PC-9 (cell line): ENCODE measurements at regions of chr4 and their contacts with region 1.

Region 1: DNA sequence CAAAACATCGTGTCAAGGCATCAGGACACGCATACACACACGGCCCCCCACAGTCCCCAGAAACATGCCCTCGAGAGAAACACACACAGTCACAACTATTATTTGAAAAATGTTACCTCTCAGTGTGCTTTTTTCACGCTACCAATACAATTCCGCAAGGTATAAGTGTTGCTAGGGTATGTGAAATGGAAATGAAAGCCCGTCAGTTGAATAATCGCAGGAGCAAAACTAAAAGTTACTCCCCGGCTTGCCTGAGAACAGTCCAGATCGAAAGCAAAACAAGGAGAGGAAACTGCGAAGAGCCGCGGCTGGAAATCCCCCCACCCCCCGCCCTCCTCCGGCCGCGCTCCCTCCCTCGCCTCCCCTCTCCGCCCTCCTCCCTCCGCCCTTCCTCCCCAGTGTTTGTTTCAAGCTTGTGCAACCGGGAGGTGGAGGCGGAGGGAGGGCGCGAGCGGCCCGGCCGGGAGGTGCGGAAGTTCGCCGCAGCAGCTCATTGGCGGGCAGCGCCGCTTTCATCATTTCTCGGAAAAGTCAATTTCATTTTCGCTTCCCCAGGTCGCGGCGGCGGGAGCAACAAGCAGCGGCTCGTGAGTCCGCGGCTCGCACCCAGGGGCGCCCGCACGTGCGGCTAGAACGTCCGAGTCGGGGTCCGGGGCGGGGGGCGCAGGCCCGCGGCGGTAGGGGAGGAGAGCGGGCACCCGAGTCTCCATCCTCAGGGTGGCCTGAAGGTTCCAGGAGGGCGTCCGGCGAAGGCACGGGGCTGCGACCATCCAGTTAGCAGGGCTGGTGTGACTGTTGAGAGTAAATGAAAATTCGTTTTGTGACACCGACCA is at the start of gene IRF2:
- DNase-seq: peak; percentile 81 to 93
- H3K4me3 ChIP-seq: peak within 1 kb of the TSS; percentile 97
- H3K27ac ChIP-seq: peak within 1 kb of the TSS; percentile 83
- H3K4me1 ChIP-seq: peaks cover 21% of the 10 kb centered on the region
- H3K27me3 ChIP-seq: no peaks in the 10 kb centered on the region
- CTCF ChIP-seq: no peak
- total RNA-seq, gene IRF2: 27.4 and 34.4 TPM in 2 replicates

Region 2: GRCh38 chr4:183287677-183288076 is 1186.8 kb before region 1 on chr4:
- CTCF ChIA-PET with region 1: no interaction called
- POLR2A ChIA-PET with region 1: no interaction called
- intact Hi-C with region 1: no loop called
- DNase-seq: no peak
- H3K4me3 ChIP-seq: no peak overlapping the region
- H3K27ac ChIP-seq: no peak overlapping the region
- H3K4me1 ChIP-seq: no peaks in the 10 kb centered on the region
- H3K27me3 ChIP-seq: no peaks in the 10 kb centered on the region
- CTCF ChIP-seq: no peak

Region 3: DNA sequence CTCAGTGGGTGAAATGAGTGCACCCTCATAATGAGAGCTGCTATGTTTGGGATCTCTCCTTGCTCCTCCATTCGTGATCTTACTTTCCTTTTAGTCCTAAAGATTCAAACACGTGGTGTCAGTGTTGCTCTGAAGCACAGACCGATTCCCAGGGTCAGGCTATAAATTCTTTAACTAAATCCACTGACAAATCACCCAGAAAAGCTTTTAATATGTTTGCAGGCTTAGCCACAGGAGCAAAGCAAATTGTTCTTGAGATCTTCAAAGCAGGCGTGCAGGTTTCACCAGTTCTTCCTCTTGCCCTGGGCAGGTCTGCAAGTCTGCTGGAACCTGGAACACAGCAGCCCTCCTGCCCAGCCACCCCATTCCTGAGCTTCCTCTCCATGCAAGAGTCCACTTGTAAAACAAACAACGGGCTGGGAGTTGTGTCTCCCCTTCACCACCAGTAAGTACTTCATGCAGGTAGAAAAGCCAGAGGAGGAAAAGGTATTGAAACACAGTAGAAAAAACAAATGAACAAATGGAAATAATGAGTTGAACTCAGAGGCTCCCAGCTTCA is 186.7 kb before region 1 on chr4:
- CTCF ChIA-PET with region 1: interaction called, 4 read pairs
- POLR2A ChIA-PET with region 1: no interaction called
- intact Hi-C with region 1: loop called (anchors 1 kb)
- DNase-seq: peak; percentile 76 to 93
- H3K4me3 ChIP-seq: peak overlapping the region; percentile 27; the same call in 1 of the 2 replicates
- H3K27ac ChIP-seq: peak overlapping the region; percentile 69
- H3K4me1 ChIP-seq: peaks cover 28% of the 10 kb centered on the region
- H3K27me3 ChIP-seq: no peaks in the 10 kb centered on the region
- CTCF ChIP-seq: peak; percentile 25; the same call in 1 of the 2 replicates

Region 4: DNA sequence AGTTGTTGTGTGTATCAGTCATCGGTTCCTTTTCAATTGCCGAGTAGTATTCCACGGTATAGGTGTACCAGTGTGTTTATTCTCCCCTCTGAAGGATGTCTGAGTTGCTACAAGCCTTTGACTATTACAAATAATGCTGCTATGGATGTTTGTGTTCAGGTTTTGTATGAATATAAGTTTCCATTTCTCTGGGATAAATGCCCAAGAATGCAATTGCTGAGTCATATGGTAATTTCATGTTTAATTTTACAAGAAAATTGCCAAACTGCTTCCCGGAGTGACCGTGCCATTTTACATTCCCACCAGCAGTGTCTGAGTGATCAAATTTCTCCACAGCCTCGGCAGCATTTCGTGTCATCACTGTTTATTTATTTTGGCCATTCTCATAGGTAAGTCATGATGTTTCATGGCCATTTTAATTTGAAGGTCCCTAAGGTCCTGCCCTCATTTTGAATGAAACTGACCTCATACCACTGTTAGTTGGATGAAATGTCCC is 74.1 kb before region 1 on chr4:
- CTCF ChIA-PET with region 1: no interaction called
- POLR2A ChIA-PET with region 1: no interaction called
- intact Hi-C with region 1: loop called (anchors 1 kb)
- DNase-seq: peak; percentile 42 to 84
- H3K4me3 ChIP-seq: no peak overlapping the region
- H3K27ac ChIP-seq: peak overlapping the region; percentile 83
- H3K4me1 ChIP-seq: peaks cover 14% of the 10 kb centered on the region
- H3K27me3 ChIP-seq: no peaks in the 10 kb centered on the region
- CTCF ChIP-seq: no peak

Region 5: DNA sequence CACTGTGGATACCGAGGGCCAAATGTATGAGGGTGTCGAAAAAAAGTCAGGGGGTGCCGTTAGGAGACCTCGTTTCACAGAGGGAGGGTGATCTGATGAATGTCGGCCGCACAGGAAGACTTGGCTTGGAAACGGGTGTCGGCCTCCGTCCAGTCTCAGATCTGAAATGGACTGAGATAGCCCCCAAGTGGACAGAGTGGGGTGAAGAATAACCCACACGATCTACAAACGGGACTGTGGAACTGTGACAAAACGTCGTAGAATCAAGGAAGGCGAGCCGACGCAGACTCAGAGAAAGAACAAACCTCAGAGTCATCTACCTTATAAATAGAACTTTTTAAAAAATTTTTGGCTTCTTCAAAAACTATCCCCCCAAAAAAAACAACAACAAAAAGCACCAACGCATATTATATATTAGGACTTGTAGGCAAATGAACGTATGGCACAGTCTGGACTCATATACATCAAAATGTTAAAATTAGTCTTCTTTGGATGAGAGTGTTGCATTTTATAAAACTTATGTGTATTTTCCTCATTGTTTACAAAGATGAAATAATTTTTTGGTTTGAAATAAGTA is 63.6 kb after region 1 on chr4:
- CTCF ChIA-PET with region 1: no interaction called
- POLR2A ChIA-PET with region 1: interaction called, 6 read pairs
- intact Hi-C with region 1: loop called (anchors 1 kb)
- DNase-seq: peak; percentile 65 to 71
- H3K4me3 ChIP-seq: peak overlapping the region; percentile 67
- H3K27ac ChIP-seq: peak overlapping the region; percentile 66
- H3K4me1 ChIP-seq: no peaks in the 10 kb centered on the region; the same call in 1 of the 2 replicates
- H3K27me3 ChIP-seq: no peaks in the 10 kb centered on the region
- CTCF ChIP-seq: peak; percentile 67

Region 6: DNA sequence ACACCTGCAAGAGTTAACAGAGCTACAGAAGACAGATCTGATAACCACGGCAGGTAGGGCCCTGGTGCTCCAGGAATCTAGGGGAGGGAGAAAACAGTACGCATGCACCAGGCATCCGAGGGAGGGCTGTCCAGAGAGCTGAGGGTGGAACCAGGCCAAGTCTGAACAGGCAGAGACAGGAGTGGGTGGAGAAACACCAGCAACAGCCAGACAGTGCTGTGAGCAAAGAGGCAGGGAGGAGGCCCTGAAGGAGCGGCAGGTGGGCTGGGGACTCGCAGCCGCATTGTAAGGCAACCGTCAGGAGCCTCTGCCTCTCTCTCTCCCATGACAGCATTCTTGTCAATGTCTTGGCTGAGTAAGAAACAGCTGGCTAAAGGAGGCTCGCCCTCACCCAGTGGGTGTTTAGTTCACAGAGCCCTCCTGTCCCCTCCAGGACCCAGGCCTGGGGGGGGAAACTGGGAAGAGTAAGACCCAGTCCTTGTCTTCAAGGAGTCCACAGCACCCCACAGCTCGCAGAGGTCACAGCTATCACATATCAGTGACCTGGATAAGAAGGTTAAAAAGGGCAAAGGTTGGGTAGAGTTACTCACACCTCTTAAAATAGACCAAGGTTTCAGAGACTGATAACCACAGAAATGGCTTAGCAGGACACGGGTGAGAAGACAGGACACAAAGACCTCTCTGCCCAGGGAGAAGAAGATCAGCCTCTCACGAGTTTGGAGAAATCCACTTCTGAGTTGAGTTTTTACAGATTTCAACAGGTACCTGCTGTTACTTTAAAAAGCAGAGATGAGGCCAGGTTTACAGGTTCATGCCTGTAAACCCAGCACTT is 340.8 kb after region 1 on chr4:
- CTCF ChIA-PET with region 1: no interaction called
- POLR2A ChIA-PET with region 1: no interaction called
- intact Hi-C with region 1: loop called (anchors 2 kb)
- DNase-seq: peak; percentile 87
- H3K4me3 ChIP-seq: peak overlapping the region; percentile 44
- H3K27ac ChIP-seq: peak overlapping the region; percentile 85
- H3K4me1 ChIP-seq: peaks cover 57% of the 10 kb centered on the region
- H3K27me3 ChIP-seq: no peaks in the 10 kb centered on the region
- CTCF ChIP-seq: no peak